CD8-positive, alpha-beta T cell (primary cell): ENCODE measurements at regions of chr2 and their contacts with region 1.

Region 1: GRCh38 chr2:236512902-236513435 is 56.7 kb upstream of the ACKR3 start:
- DNase-seq: peak; percentile 52 to 84 (median 72)
- ATAC-seq: peak; percentile 96
- H3K4me3 ChIP-seq: no peak overlapping the region
- H3K4me3 Mint-ChIP-seq: no peak overlapping the region
- H3K27ac ChIP-seq: no peak overlapping the region
- H3K27ac Mint-ChIP-seq: no peak overlapping the region
- H3K4me1 ChIP-seq: peaks cover 8% of the 10 kb centered on the region
- H3K4me1 Mint-ChIP-seq: no peaks in the 10 kb centered on the region
- H3K27me3 ChIP-seq: no peaks in the 10 kb centered on the region
- H3K27me3 Mint-ChIP-seq: no peaks in the 10 kb centered on the region
- CTCF ChIP-seq: peak; percentile 83

Region 2: GRCh38 chr2:236523249-236523648 is 10.3 kb after region 1 on chr2:
- CTCF ChIA-PET with region 1: interaction called, 16 read pairs
- POLR2A ChIA-PET with region 1: interaction called, 5 read pairs
- intact Hi-C with region 1: no loop called
- DNase-seq: no peak
- ATAC-seq: no peak
- H3K4me3 ChIP-seq: no peak overlapping the region
- H3K4me3 Mint-ChIP-seq: no peak overlapping the region
- H3K27ac ChIP-seq: no peak overlapping the region
- H3K27ac Mint-ChIP-seq: no peak overlapping the region
- H3K4me1 ChIP-seq: no peaks in the 10 kb centered on the region
- H3K4me1 Mint-ChIP-seq: no peaks in the 10 kb centered on the region
- H3K27me3 ChIP-seq: peaks cover 0 to 2% of the 10 kb centered on the region in 2 experiments
- H3K27me3 Mint-ChIP-seq: no peaks in the 10 kb centered on the region
- CTCF ChIP-seq: no peak

Region 3: GRCh38 chr2:236545814-236546480 is 33.0 kb after region 1 on chr2:
- CTCF ChIA-PET with region 1: interaction called, 18 read pairs
- POLR2A ChIA-PET with region 1: no interaction called
- intact Hi-C with region 1: loop called (anchors 2 to 5 kb)
- DNase-seq: peak in 3 of 9 experiments; percentile 36 to 76 (median 58)
- ATAC-seq: peak; percentile 53
- H3K4me3 ChIP-seq: peak overlapping the region; percentile 17 to 33
- H3K4me3 Mint-ChIP-seq: peak overlapping the region; percentile 74
- H3K27ac ChIP-seq: peak overlapping the region; percentile 50 to 87
- H3K27ac Mint-ChIP-seq: peak overlapping the region; percentile 87
- H3K4me1 ChIP-seq: peaks cover 75% of the 10 kb centered on the region
- H3K4me1 Mint-ChIP-seq: peaks cover 95% of the 10 kb centered on the region
- H3K27me3 ChIP-seq: no peaks in the 10 kb centered on the region
- H3K27me3 Mint-ChIP-seq: no peaks in the 10 kb centered on the region
- CTCF ChIP-seq: no peak

Region 4: GRCh38 chr2:236558993-236559978 is 46.3 kb after region 1 on chr2:
- CTCF ChIA-PET with region 1: interaction called, 25 read pairs
- POLR2A ChIA-PET with region 1: interaction called, 3 read pairs
- intact Hi-C with region 1: no loop called
- DNase-seq: no peak
- ATAC-seq: no peak
- H3K4me3 ChIP-seq: no peak overlapping the region
- H3K4me3 Mint-ChIP-seq: no peak overlapping the region
- H3K27ac ChIP-seq: no peak overlapping the region
- H3K27ac Mint-ChIP-seq: peak overlapping the region; percentile 58
- H3K4me1 ChIP-seq: peaks cover 23% of the 10 kb centered on the region
- H3K4me1 Mint-ChIP-seq: peaks cover 51% of the 10 kb centered on the region
- H3K27me3 ChIP-seq: no peaks in the 10 kb centered on the region
- H3K27me3 Mint-ChIP-seq: no peaks in the 10 kb centered on the region
- CTCF ChIP-seq: no peak

Region 5: GRCh38 chr2:236576087-236576486 is 63.1 kb after region 1 on chr2:
- CTCF ChIA-PET with region 1: interaction called, 323 read pairs
- POLR2A ChIA-PET with region 1: no interaction called
- intact Hi-C with region 1: no loop called
- DNase-seq: no peak
- ATAC-seq: no peak
- H3K4me3 ChIP-seq: no peak overlapping the region
- H3K4me3 Mint-ChIP-seq: no peak overlapping the region
- H3K27ac ChIP-seq: no peak overlapping the region
- H3K27ac Mint-ChIP-seq: no peak overlapping the region
- H3K4me1 ChIP-seq: no peaks in the 10 kb centered on the region
- H3K4me1 Mint-ChIP-seq: peaks cover 6% of the 10 kb centered on the region
- H3K27me3 ChIP-seq: no peaks in the 10 kb centered on the region
- H3K27me3 Mint-ChIP-seq: no peaks in the 10 kb centered on the region
- CTCF ChIP-seq: no peak

Region 6: DNA sequence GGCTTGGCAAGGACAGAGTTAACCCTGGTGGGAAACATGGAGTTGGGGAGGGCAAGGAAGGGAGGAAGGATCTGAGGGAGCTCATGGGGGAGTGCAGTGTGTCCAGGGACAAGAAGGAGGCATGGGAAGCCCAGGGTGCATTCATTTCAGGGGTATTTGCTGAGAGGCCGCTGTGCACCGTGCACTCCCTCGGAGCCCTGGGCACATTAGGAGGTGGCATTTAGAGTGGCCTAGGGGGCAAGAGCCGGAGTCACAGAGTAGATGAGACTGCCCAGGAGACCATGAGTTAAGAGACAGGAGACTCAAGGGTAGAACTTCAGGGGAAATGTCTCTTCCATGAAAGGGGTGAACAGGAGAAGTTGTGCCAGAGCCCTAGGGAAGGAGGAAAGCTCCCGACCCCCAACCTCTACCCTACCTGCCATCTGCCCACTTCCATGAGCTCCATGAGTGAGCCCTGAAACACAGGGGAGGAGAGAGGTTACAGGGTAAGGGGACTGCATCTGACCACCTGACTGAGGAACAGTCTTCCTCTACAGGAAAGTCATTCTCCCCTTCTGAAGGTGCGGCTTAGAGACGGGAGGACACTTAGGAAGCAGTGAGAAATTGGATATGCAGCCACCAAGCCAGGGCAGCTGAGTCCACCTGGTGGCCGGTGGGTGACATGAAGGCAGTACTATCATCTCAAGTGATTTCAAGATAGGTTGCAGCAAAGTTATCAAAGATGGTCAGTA is 514.2 kb after region 1 on chr2:
- CTCF ChIA-PET with region 1: interaction called, 11 read pairs
- POLR2A ChIA-PET with region 1: no interaction called
- intact Hi-C with region 1: loop called (anchors 1 to 2 kb)
- DNase-seq: peak; percentile 16 to 57 (median 46)
- ATAC-seq: peak; percentile 49
- H3K4me3 ChIP-seq: no peak overlapping the region
- H3K4me3 Mint-ChIP-seq: no peak overlapping the region
- H3K27ac ChIP-seq: no peak overlapping the region
- H3K27ac Mint-ChIP-seq: no peak overlapping the region
- H3K4me1 ChIP-seq: no peaks in the 10 kb centered on the region
- H3K4me1 Mint-ChIP-seq: no peaks in the 10 kb centered on the region
- H3K27me3 ChIP-seq: no peaks in the 10 kb centered on the region
- H3K27me3 Mint-ChIP-seq: no peaks in the 10 kb centered on the region
- CTCF ChIP-seq: peak; percentile 59

Region 7: DNA sequence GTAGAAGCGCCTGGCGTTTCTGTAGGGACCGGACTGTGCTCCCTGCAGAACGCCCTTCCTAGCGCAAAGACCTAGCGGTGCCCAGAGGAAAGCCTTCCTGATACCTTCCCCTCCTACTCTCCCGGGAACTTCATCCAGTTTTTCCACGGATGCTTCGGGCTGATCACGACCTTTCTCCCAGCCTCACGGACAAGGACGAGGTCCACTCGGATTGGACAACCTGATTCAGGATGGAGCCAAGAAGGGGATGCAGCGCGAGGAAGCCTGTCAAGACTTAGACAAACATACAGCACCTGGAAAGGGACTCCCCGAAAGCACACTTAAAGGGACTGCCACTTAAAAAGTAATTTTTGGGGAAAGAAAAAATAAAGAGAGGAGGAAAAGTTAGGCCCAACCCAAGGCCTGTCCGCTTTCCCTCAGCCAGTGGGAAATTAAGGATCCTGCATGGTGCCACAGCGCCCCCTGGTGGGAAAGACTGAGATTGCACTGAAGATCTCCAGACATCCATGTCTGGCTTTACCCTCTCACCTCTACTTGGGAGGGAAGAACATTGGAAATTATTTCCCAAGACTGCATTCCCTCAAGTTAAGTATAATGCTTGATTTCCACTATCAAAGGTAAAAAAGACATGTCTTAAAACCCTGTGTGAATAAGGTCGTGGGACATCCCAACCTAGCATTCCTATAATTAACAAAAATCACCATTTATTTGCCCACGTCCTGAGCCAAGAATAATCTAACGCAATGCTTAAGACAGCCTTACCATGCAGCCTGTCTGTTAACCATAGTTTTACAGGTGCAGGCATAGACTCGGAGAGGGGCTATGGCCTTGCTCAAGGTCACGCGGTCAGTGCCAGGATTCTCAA is 559.3 kb after region 1 on chr2:
- CTCF ChIA-PET with region 1: interaction called, 4 read pairs
- POLR2A ChIA-PET with region 1: no interaction called
- intact Hi-C with region 1: loop called in 1 of 2 experiments (anchors 1 kb)
- DNase-seq: peak; percentile 47 to 83 (median 69)
- ATAC-seq: peak; percentile 48
- H3K4me3 ChIP-seq: no peak overlapping the region
- H3K4me3 Mint-ChIP-seq: no peak overlapping the region
- H3K27ac ChIP-seq: no peak overlapping the region
- H3K27ac Mint-ChIP-seq: no peak overlapping the region
- H3K4me1 ChIP-seq: no peaks in the 10 kb centered on the region
- H3K4me1 Mint-ChIP-seq: no peaks in the 10 kb centered on the region
- H3K27me3 ChIP-seq: no peaks in the 10 kb centered on the region
- H3K27me3 Mint-ChIP-seq: no peaks in the 10 kb centered on the region
- CTCF ChIP-seq: peak; percentile 98

Region 8: DNA sequence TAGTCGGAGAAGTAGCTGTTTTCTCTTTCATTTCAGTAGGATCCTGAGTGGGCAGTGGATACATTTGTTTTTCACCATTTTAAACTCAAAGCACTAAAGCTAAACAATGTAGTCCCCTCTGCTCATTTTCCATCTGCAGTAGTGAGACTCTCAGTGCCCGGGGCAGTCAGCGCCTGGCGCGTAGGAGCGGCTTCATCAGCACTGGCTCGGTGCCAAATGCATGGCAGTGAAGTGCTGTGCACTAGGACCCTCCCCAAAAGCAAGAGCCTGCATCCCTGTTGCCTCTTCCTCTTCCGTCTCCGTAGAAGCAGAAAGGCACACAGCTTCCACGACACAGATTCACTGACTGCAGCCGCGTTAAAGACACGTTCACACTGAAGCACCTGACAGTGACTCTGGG is 1568.2 kb after region 1 on chr2:
- CTCF ChIA-PET with region 1: no interaction called
- POLR2A ChIA-PET with region 1: no interaction called
- intact Hi-C with region 1: no loop called
- DNase-seq: no peak
- ATAC-seq: no peak
- H3K4me3 ChIP-seq: no peak overlapping the region
- H3K4me3 Mint-ChIP-seq: no peak overlapping the region
- H3K27ac ChIP-seq: no peak overlapping the region
- H3K27ac Mint-ChIP-seq: no peak overlapping the region
- H3K4me1 ChIP-seq: no peaks in the 10 kb centered on the region
- H3K4me1 Mint-ChIP-seq: no peaks in the 10 kb centered on the region
- H3K27me3 ChIP-seq: no peaks in the 10 kb centered on the region
- H3K27me3 Mint-ChIP-seq: no peaks in the 10 kb centered on the region
- CTCF ChIP-seq: no peak